IMR-90 (cell line): ENCODE measurements at regions of chr1 and their contacts with region 1.

Region 1: GRCh38 chr1:201578008-201578888 is 39.3 kb downstream of the NAV1 start:
- DNase-seq: no peak
- ATAC-seq: no peak
- H3K4me3 ChIP-seq: no peak overlapping the region
- H3K27ac ChIP-seq: no peak overlapping the region
- H3K4me1 ChIP-seq: peaks cover 17% of the 10 kb centered on the region
- H3K27me3 ChIP-seq: no peaks in the 10 kb centered on the region
- CTCF ChIP-seq: no peak
- POLR2A ChIP-seq: no peak
- RAD21 ChIP-seq: no peak

Region 2: DNA sequence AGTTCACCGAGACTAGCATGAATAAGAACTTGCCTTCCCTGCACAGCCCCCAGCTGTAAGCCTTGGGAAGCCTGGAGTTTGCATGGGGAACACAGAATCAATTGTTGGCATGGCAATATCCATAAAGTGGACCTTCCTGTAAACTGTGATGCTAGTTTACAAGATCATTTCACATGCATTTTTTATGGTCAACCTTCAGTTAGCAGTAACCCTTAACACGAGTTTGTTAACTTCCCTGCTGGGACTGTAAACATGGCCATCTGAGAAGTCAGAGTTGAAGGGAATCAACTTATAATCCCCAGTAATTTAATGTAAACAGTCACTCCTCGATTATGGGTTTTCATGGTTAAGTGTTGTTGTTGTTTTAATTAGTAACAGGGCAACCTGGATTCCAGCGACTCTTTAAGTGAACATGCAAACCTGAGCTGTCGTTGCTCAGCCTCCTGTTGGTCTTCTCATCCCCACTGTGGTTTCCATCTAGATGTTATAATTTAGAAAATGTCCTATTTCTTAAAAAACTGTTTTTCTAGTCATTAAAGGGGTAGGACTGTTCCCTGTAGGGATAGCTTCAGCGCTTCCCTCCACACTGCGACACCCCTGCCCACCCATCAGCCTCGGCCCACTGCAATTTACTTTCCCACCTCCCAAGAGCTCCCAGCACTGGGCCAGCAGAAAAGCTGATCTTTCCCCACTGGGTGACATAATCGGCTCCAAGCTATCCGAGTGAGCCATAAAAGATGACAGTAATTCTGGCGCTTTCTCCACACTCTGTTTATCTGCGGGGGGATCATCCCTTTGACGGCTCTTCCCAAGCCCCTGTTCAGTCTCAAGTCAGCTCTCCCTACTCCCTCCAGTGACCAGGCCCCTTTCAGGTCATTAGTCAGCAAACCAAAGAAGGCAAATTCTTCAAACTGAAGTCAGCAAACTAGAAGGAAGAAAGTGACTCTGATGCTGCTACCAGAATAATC is 143.1 kb after region 1 on chr1:
- CTCF ChIA-PET with region 1: no interaction called
- POLR2A ChIA-PET with region 1: interaction called, 11 read pairs
- dilution Hi-C with region 1: no loop called
- in situ Hi-C with region 1: no loop called
- intact Hi-C with region 1: no loop called
- DNase-seq: peak; percentile 83
- ATAC-seq: peak; percentile 34
- H3K4me3 ChIP-seq: no peak overlapping the region
- H3K27ac ChIP-seq: peak overlapping the region; percentile 88
- H3K4me1 ChIP-seq: peaks cover 32% of the 10 kb centered on the region
- H3K27me3 ChIP-seq: no peaks in the 10 kb centered on the region
- CTCF ChIP-seq: no peak
- POLR2A ChIP-seq: no peak
- RAD21 ChIP-seq: no peak; the same call in 1 of the 2 replicates